ENCODE measurements at regions of chr1 and their contacts with region 1.

Region 1: GRCh38 chr1:18926315-18927081 is 24.1 kb upstream of the ALDH4A1 start:
- DNase-seq: peak; percentile 83
- H3K4me3 Mint-ChIP-seq: peak overlapping the region; percentile 82
- H3K27ac Mint-ChIP-seq: peak overlapping the region; percentile 98
- H3K4me1 Mint-ChIP-seq: peaks cover 70% of the 10 kb centered on the region
- H3K27me3 Mint-ChIP-seq: peaks cover 1% of the 10 kb centered on the region

Region 2: GRCh38 chr1:18836654-18837053 is 89.8 kb before region 1 on chr1:
- intact Hi-C with region 1: no loop called
- DNase-seq: no peak
- H3K4me3 Mint-ChIP-seq: no peak overlapping the region
- H3K27ac Mint-ChIP-seq: no peak overlapping the region
- H3K4me1 Mint-ChIP-seq: no peaks in the 10 kb centered on the region
- H3K27me3 Mint-ChIP-seq: no peaks in the 10 kb centered on the region

Region 3: DNA sequence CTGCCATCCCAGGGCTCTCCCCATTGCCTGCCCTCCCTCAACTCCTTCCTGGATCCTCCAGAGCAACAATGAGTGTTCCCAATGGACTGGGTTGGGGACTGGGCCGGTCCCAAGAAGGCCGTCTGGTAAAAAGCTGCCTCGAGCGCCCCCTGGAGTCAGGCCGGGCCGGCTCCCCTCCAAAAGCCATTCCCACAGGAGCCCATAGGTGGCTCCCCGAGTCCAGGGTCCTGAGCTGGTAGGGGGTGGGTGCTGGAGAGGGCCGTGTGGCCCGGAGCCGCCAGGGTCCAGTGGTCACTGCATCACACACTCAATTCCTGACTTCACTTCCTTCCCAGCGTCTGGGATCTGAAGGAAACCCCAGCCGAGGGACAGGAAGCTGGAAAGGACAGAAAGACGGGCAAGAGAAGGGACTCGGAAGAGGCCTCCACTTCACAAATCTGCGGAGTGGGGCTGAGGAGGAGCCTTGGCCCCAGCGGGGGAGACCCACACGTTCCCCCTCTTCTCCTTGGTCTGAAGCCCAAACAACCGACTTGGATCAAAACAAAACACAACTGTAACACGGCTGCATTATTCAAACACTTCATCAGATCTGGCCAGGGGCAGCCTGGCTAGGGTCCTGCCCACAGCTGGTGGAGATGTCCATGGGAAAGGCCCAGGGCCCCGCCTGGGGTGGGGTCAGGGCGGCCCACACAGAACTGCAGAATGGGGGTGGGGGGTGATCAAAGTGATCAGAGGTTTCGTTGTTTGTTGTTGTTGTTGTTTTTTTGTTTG is 13.2 kb before region 1 on chr1:
- intact Hi-C with region 1: loop called (anchors 2 kb)
- DNase-seq: peak; percentile 62
- H3K4me3 Mint-ChIP-seq: no peak overlapping the region
- H3K27ac Mint-ChIP-seq: no peak overlapping the region
- H3K4me1 Mint-ChIP-seq: peaks cover 6% of the 10 kb centered on the region
- H3K27me3 Mint-ChIP-seq: no peaks in the 10 kb centered on the region

Region 4: DNA sequence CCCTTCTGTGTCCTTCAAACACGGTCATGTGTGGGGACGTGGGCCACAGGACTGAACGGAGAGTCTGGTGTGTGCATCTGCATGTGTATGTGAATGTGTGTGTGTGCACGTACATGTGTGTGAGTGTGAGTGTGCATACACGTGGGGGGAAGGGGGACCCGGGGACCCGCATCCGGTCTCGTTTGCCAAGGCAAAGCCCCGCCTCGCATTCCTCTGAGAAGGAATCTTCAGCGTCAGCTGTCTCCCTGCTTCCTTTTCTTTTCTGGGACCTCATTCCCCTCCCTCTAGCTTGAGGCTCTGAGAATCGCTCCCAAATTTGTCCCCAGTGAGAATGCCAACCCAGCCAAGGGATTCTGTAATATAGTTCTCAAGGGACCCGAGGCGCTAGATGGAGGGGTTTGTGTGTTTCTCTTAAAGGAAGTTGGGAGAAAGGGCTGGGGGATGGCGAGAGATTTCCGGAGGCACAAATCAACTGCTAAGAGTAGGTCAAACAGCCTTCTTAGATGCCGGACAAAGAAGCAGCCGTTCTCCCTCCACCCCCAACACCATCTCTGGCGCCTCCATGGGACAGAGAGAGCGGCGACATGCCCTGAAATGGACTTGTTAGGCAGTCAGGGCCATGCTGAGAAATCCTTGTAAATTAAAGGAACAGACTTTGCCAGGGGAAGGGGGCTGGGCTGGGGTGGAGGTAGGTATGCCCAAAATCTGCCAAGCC is 23.3 kb after region 1 on chr1:
- intact Hi-C with region 1: loop called (anchors 1 kb)
- DNase-seq: no peak
- H3K4me3 Mint-ChIP-seq: peak overlapping the region; percentile 89
- H3K27ac Mint-ChIP-seq: peak overlapping the region; percentile 99
- H3K4me1 Mint-ChIP-seq: peaks cover 95% of the 10 kb centered on the region
- H3K27me3 Mint-ChIP-seq: peaks cover 2% of the 10 kb centered on the region

Region 5: GRCh38 chr1:18956369-18957135 is 30.1 kb after region 1 on chr1 and contains the start of gene IFFO2:
- intact Hi-C with region 1: loop called (anchors 1 kb)
- DNase-seq: peak; percentile 97
- H3K4me3 Mint-ChIP-seq: peak within 1 kb of the TSS; percentile 89
- H3K27ac Mint-ChIP-seq: peak within 1 kb of the TSS; percentile 78
- H3K4me1 Mint-ChIP-seq: peaks cover 50% of the 10 kb centered on the region
- H3K27me3 Mint-ChIP-seq: peaks cover 26% of the 10 kb centered on the region
- total RNA-seq, gene IFFO2: 31.8 and 32.6 TPM in 2 replicates

Region 6: GRCh38 chr1:19010995-19011844 is 84.7 kb after region 1 on chr1:
- intact Hi-C with region 1: loop called (anchors 1 kb)
- DNase-seq: peak; percentile 75
- H3K4me3 Mint-ChIP-seq: peak overlapping the region; percentile 59
- H3K27ac Mint-ChIP-seq: peak overlapping the region; percentile 64
- H3K4me1 Mint-ChIP-seq: peaks cover 33% of the 10 kb centered on the region
- H3K27me3 Mint-ChIP-seq: peaks cover 15% of the 10 kb centered on the region

Region 7: GRCh38 chr1:19204446-19205266 is 278.2 kb after region 1 on chr1:
- intact Hi-C with region 1: loop called (anchors 1 kb)
- DNase-seq: no peak
- H3K4me3 Mint-ChIP-seq: no peak overlapping the region
- H3K27ac Mint-ChIP-seq: peak overlapping the region; percentile 1
- H3K4me1 Mint-ChIP-seq: peaks cover 47% of the 10 kb centered on the region
- H3K27me3 Mint-ChIP-seq: no peaks in the 10 kb centered on the region

Measured in activated T-helper 1 cell treated with anti-CD3 and anti-CD28 coated beads, Interleukin-12 subunit alpha, Interleukin-12 subunit beta, Interleukin-2, Interleukin-4 antibody, amounts not matched to agents 30 ng/mL and 10 ng/mL and 1 ng/mL, durations not matched to agents 14 hours and 24 hours and 36 hours (primary cell).